Prostate gland (tissue), 2 donors: ENCODE measurements at regions of chr7 and their contacts with region 1.

Region 1: GRCh38 chr7:74269757-74270277 is 15.6 kb upstream of the RFC2 start:
- DNase-seq: no peak
- H3K4me3 ChIP-seq: peak overlapping the region; percentile 42 to 46
- H3K27ac ChIP-seq: no peak overlapping the region
- H3K4me1 ChIP-seq: no peaks in the 10 kb centered on the region
- H3K27me3 ChIP-seq: no peaks in the 10 kb centered on the region
- CTCF ChIP-seq: no peak
- POLR2A ChIP-seq: no peak

Region 2: GRCh38 chr7:74289018-74289658 is 19.3 kb after region 1 on chr7 and contains the start of gene CLIP2:
- intact Hi-C with region 1: loop called (anchors 2 kb)
- DNase-seq: peak; percentile 76
- H3K4me3 ChIP-seq: peak within 1 kb of the TSS; percentile 74 to 80
- H3K27ac ChIP-seq: peak within 1 kb of the TSS; percentile 68 to 69
- H3K4me1 ChIP-seq: peaks cover 9% of the 10 kb centered on the region
- H3K27me3 ChIP-seq: no peaks in the 10 kb centered on the region
- CTCF ChIP-seq: peak in 1 of 4 experiments; percentile 30
- POLR2A ChIP-seq: peak; percentile 42
- total RNA-seq, gene CLIP2: 18.6 to 24.1 TPM